Right ventricle myocardium superior (tissue), 1 donor: ENCODE measurements at regions of chr9 and their contacts with region 1.

Region 1: GRCh38 chr9:69421908-69422801 is 97.1 kb downstream of the ENTREP1 start:
- DNase-seq: peak; percentile 55
- ATAC-seq: peak; percentile 92

Region 2: DNA sequence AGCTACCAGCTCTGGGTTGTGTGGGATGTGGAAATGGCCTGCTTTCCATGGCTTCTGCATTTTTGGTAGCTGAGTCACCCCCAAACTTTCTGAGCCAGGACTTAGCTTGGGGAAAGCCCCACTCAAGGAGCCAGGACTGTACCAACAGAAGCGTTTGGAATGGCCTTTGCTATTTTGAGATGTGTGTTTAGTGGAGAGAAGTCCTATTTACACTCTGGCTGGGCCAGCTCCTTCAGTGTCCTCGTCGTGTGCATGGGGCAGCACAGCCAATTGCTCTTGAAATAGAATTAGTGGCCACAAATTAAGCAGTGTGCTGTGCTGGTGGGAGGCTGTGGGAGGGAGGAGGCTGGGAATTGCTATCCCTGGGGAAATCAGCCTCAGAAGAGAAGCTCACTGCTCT is 45.5 kb before region 1 on chr9:
- intact Hi-C with region 1: no loop called
- DNase-seq: no peak
- ATAC-seq: peak; percentile 85

Region 3: GRCh38 chr9:69549310-69550202 is 127.4 kb after region 1 on chr9:
- intact Hi-C with region 1: loop called (anchors 2 kb)
- DNase-seq: no peak
- ATAC-seq: peak; percentile 82

Region 4: DNA sequence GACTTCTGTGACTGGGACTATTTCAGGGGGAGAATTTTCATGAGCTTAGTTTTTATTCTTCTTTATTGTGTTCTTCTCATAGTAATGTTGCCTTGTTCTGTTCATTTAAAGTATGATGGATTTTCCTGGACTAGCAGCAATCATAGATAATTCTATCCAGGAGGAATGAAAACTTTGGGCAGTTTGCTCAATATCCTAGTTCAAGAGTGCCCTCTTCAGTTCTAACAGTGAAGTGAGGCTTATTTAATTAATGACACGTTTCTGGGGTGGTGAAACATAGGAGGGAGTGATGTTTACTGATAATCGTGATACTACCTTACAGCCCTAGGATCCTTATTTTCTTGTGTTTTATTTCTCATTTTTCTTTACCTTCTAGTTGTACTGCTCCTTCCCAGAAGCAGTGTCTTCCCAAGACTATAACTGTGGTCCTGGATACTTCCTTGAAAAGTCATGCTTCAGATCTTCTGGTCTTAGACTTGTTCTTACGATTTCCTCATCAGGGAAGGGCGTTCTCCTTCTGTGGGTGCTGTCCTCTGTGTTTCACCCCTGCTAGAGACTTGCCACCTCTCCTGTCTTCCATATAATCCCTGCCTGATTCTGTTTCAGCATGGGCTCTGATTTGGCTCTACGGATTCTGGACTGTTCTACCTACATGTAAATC is 455.8 kb after region 1 on chr9:
- intact Hi-C with region 1: loop called (anchors 5 kb)
- DNase-seq: no peak
- ATAC-seq: peak; percentile 82

Region 5: GRCh38 chr9:69919461-69920061 is 497.4 kb after region 1 on chr9:
- intact Hi-C with region 1: loop called (anchors 10 kb)
- DNase-seq: no peak
- ATAC-seq: peak; percentile 90